T-cell (primary cell): ENCODE measurements at regions of chr2 and their contacts with region 1.

Region 1: GRCh38 chr2:126527836-126528507 is 128.0 kb upstream of the GYPC start:
- DNase-seq: peak; percentile 42 to 82 (median 68)
- ATAC-seq: peak; percentile 69 to 78 (median 70)
- H3K4me3 ChIP-seq: no peak overlapping the region
- H3K4me3 Mint-ChIP-seq: no peak overlapping the region
- H3K27ac ChIP-seq: no peak overlapping the region
- H3K27ac Mint-ChIP-seq: no peak overlapping the region
- H3K4me1 ChIP-seq: no peaks in the 10 kb centered on the region
- H3K4me1 Mint-ChIP-seq: no peaks in the 10 kb centered on the region
- H3K27me3 ChIP-seq: no peaks in the 10 kb centered on the region
- H3K27me3 Mint-ChIP-seq: peaks cover 0 to 1% of the 10 kb centered on the region in 2 donors

Region 2: DNA sequence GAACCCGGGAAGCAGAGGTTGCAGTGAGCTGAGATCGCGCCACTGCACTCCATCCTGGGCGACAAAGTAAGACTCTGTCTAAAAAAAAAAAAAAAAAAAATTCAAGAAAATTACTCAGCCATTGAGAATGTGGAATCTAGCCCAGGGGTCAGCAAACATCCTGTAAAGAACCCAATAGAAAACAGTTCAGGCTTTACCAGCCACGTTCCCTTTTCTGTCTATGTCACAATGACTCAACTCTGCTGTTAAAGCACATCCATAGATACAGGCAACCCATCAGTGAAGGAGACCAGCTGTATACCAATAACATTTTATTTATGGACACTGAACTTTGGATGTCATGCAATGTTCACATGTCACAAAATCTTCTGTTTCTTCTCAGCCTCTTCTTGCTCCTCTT is 307.6 kb before region 1 on chr2:
- CTCF ChIA-PET with region 1: no interaction called
- POLR2A ChIA-PET with region 1: no interaction called
- DNase-seq: no peak
- ATAC-seq: no peak
- H3K4me3 ChIP-seq: no peak overlapping the region
- H3K4me3 Mint-ChIP-seq: no peak overlapping the region
- H3K27ac ChIP-seq: no peak overlapping the region
- H3K27ac Mint-ChIP-seq: no peak overlapping the region
- H3K4me1 ChIP-seq: no peaks in the 10 kb centered on the region
- H3K4me1 Mint-ChIP-seq: no peaks in the 10 kb centered on the region
- H3K27me3 ChIP-seq: no peaks in the 10 kb centered on the region
- H3K27me3 Mint-ChIP-seq: peaks cover 0 to 12% of the 10 kb centered on the region in 2 donors

Region 3: DNA sequence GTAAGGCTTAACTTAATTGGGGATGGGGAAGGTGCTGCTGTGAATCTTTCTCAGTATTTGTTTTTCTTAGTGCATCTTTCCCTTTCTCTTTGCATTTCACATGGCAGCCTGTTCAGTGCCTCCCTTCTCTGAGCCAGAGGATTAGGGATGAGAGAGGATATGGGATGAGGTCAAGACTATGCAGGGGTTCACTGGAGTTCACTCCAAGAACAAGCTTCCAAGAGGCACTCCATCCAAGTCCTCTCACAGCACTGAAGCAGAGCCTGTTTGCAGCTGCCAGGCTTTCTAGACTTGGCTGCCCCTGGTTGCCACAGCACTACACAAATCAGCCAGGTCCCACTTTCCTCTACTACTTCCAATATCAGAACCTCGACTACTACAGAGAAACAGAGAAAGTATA is 47.7 kb after region 1 on chr2:
- CTCF ChIA-PET with region 1: no interaction called
- POLR2A ChIA-PET with region 1: no interaction called
- DNase-seq: no peak
- ATAC-seq: no peak
- H3K4me3 ChIP-seq: no peak overlapping the region
- H3K4me3 Mint-ChIP-seq: no peak overlapping the region
- H3K27ac ChIP-seq: no peak overlapping the region
- H3K27ac Mint-ChIP-seq: no peak overlapping the region
- H3K4me1 ChIP-seq: no peaks in the 10 kb centered on the region
- H3K4me1 Mint-ChIP-seq: no peaks in the 10 kb centered on the region
- H3K27me3 ChIP-seq: peaks cover 0 to 5% of the 10 kb centered on the region in 2 experiments
- H3K27me3 Mint-ChIP-seq: peaks cover 3 to 8% of the 10 kb centered on the region in 2 donors

Region 4: DNA sequence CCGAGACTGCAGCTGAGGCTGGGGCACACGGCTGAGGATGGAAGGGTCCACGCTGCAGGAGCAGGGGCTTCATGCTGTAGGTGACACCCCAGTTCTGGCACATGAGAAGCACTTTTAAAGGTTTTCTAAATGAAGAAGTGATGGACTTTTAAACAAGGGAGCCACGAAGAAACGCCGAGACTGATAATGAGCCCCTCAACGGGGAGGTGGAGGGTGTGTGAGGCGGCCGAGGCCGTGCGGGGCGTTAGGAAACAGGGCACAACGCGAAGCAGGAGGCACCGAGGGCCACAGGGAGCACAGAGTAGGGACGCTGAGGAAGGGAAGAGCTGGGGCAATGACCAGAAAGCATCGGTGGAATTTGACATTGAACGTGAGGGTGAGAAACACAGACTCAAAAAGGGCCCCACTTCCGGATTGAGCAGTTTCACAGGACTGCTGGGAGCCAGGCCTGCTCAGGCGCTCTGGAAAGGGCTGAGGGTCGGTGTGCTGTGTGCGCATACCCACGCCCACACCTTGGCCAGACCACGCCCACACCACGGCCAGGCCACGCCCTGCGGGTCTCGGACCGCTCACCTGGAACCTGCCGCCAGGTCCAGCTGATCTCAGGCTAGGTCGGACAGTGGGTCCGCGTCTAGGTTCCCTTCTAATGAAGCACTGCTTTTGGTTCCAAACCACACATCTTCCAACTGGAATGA is 243.7 kb after region 1 on chr2:
- CTCF ChIA-PET with region 1: interaction called, 86 to 103 read pairs
- POLR2A ChIA-PET with region 1: no interaction called
- DNase-seq: no peak
- ATAC-seq: no peak
- H3K4me3 ChIP-seq: no peak overlapping the region
- H3K4me3 Mint-ChIP-seq: no peak overlapping the region
- H3K27ac ChIP-seq: no peak overlapping the region
- H3K27ac Mint-ChIP-seq: no peak overlapping the region
- H3K4me1 ChIP-seq: peaks cover under 1 to 15% of the 10 kb centered on the region in 2 experiments
- H3K4me1 Mint-ChIP-seq: peaks cover 22 to 48% (median 43%) of the 10 kb centered on the region in 3 donors
- H3K27me3 ChIP-seq: peaks cover 0 to 5% of the 10 kb centered on the region in 2 experiments
- H3K27me3 Mint-ChIP-seq: peaks cover 0 to 4% of the 10 kb centered on the region in 2 donors

Region 5: GRCh38 chr2:126776692-126777619 is 249.0 kb after region 1 on chr2:
- CTCF ChIA-PET with region 1: interaction called, 86 to 103 read pairs
- POLR2A ChIA-PET with region 1: no interaction called
- DNase-seq: peak; percentile 46 to 88 (median 77)
- ATAC-seq: peak; percentile 85 to 89 (median 88)
- H3K4me3 ChIP-seq: peak overlapping the region; percentile 72 to 91
- H3K4me3 Mint-ChIP-seq: peak overlapping the region; percentile 92 to 93 (median 93)
- H3K27ac ChIP-seq: peak overlapping the region; percentile 34
- H3K27ac Mint-ChIP-seq: peak overlapping the region; percentile 88 to 95
- H3K4me1 ChIP-seq: peaks cover 0 to 6% of the 10 kb centered on the region in 2 experiments
- H3K4me1 Mint-ChIP-seq: peaks cover 17 to 21% (median 17%) of the 10 kb centered on the region in 3 donors
- H3K27me3 ChIP-seq: peaks cover 0 to 15% of the 10 kb centered on the region in 2 experiments
- H3K27me3 Mint-ChIP-seq: peaks cover 7 to 8% of the 10 kb centered on the region in 2 donors

Region 6: GRCh38 chr2:126971481-126972278 is 443.7 kb after region 1 on chr2:
- CTCF ChIA-PET with region 1: interaction called, 22 read pairs
- POLR2A ChIA-PET with region 1: interaction called in 1 of 2 experiments, 3 read pairs
- DNase-seq: peak; percentile 34 to 76 (median 57)
- ATAC-seq: peak; percentile 85 to 90 (median 86)
- H3K4me3 ChIP-seq: peak overlapping the region; percentile 47 to 68
- H3K4me3 Mint-ChIP-seq: peak overlapping the region; percentile 58 to 62 (median 62)
- H3K27ac ChIP-seq: no peak overlapping the region
- H3K27ac Mint-ChIP-seq: no peak overlapping the region
- H3K4me1 ChIP-seq: peaks cover 0 to 15% of the 10 kb centered on the region in 2 experiments
- H3K4me1 Mint-ChIP-seq: peaks cover 4 to 11% (median 10%) of the 10 kb centered on the region in 3 donors
- H3K27me3 ChIP-seq: peaks cover 0 to 56% of the 10 kb centered on the region in 2 experiments
- H3K27me3 Mint-ChIP-seq: peaks cover 38 to 51% of the 10 kb centered on the region in 2 donors